Heart left ventricle (tissue), 16 donors: ENCODE measurements at regions of chr11 and their contacts with region 1.

Region 1: GRCh38 chr11:83071567-83072349 is at the start of gene RAB30:
- DNase-seq: peak; percentile 93 to 99 (median 98)
- ATAC-seq: peak; percentile 98 to 99 (median 99)
- H3K4me3 ChIP-seq: peak within 1 kb of the TSS; percentile 56 to 95 (median 84)
- H3K27ac ChIP-seq: peak within 1 kb of the TSS; percentile 63 to 95 (median 93)
- H3K4me1 ChIP-seq: peaks cover 12 to 64% (median 39%) of the 10 kb centered on the region in 12 donors
- H3K27me3 ChIP-seq: no peaks in the 10 kb centered on the region
- CTCF ChIP-seq: no peak
- POLR2A ChIP-seq: peak; percentile 51 to 88
- total RNA-seq, gene RAB30: 13.8 to 28.4 (median 23.4) TPM

Region 2: GRCh38 chr11:82906244-82906654 is 165.5 kb before region 1 on chr11:
- intact Hi-C with region 1: loop called in 5 of 10 experiments (anchors 5 kb)
- DNase-seq: no peak
- ATAC-seq: no peak
- H3K4me3 ChIP-seq: no peak overlapping the region
- H3K27ac ChIP-seq: peak overlapping the region in 1 of 12 donors; percentile 6
- H3K4me1 ChIP-seq: peaks cover 0 to 21% (median 3%) of the 10 kb centered on the region in 12 donors
- H3K27me3 ChIP-seq: no peaks in the 10 kb centered on the region
- CTCF ChIP-seq: peak; percentile 53 to 77 (median 72)
- POLR2A ChIP-seq: no peak

Region 3: GRCh38 chr11:82969811-82970210 is 101.9 kb before region 1 on chr11:
- intact Hi-C with region 1: loop called in 1 of 10 experiments (anchors 5 kb)
- DNase-seq: no peak
- ATAC-seq: no peak
- H3K4me3 ChIP-seq: no peak overlapping the region
- H3K27ac ChIP-seq: no peak overlapping the region
- H3K4me1 ChIP-seq: no peaks in the 10 kb centered on the region
- H3K27me3 ChIP-seq: no peaks in the 10 kb centered on the region
- CTCF ChIP-seq: no peak
- POLR2A ChIP-seq: no peak

Region 4: DNA sequence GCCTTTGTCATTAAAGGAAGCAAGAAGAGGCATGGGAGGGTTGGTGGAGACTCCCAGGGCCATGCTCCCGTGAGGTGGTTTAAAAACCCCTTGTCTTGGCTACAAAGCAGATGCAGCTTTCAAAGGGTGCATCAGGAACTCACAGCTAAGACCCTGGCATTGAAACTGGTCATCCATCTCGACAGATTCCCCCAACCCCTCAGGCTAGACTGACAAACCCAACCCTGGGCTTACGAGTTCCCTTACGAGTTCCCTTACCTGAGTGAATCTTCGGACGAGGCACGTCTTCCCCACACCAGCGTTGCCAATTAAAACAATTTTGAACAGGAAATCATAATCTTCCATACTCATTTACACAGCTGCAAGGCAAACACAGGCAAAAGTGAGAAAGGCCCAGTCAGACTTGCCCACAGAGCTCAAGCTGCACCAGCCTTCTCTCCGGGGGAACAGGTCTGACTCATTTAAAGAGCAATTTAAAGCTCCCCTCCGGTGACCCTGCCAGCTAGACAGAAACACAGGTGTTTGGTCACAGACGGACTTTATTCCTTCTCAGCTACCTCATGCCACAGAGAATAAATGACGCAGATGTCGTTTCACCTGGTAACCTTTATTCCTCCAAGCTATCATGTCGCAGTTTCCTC is 74.7 kb before region 1 on chr11:
- intact Hi-C with region 1: loop called in 4 of 10 experiments (anchors 5 kb)
- DNase-seq: no peak
- ATAC-seq: no peak
- H3K4me3 ChIP-seq: no peak overlapping the region
- H3K27ac ChIP-seq: peak overlapping the region in 5 of 12 donors; percentile 8 to 65 (median 40)
- H3K4me1 ChIP-seq: peaks cover 0 to 84% (median 42%) of the 10 kb centered on the region in 12 donors
- H3K27me3 ChIP-seq: no peaks in the 10 kb centered on the region
- CTCF ChIP-seq: no peak
- POLR2A ChIP-seq: no peak

Region 5: DNA sequence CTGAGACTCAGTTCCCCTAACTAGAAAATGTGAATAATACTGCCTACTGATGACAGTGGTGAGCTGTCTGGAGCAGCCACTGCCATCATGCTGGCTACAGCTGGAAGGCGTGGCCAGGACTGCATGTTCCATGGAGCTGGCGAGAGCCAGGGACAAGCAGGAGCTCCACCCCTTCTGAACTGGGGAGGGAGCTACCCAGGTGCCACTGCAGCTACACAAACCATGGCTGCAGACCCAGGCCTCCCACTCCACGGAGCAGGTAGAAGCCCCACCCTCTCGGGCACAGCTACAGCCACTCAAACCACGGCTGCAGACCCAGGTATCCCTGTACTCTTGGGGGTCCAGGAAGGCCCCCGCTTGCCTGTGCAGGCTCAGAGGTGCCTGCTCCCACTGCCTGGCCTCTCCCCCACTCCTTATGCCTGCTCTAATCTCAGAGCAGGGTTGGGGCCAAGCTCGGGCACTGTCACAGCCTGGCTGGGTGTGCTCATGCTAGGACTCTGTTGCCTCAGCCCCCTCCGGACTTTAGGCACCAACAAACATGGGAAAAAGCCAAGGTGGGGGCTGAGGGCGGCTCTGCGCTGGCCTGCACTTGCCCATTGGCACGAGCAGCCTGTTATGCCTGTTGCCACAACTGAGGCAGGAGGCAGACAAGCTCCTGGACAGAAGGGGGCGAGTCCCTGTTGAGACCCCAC is 51.7 kb before region 1 on chr11:
- intact Hi-C with region 1: no loop called
- DNase-seq: peak in 4 of 5 donors; percentile 43 to 84 (median 74)
- ATAC-seq: peak; percentile 96 to 97 (median 96)
- H3K4me3 ChIP-seq: peak overlapping the region in 2 of 12 donors; percentile 8 to 12
- H3K27ac ChIP-seq: peak overlapping the region in 5 of 12 donors; percentile 6 to 69 (median 50)
- H3K4me1 ChIP-seq: peaks cover 0 to 60% (median 26%) of the 10 kb centered on the region in 12 donors
- H3K27me3 ChIP-seq: no peaks in the 10 kb centered on the region
- CTCF ChIP-seq: no peak
- POLR2A ChIP-seq: no peak

Region 6: DNA sequence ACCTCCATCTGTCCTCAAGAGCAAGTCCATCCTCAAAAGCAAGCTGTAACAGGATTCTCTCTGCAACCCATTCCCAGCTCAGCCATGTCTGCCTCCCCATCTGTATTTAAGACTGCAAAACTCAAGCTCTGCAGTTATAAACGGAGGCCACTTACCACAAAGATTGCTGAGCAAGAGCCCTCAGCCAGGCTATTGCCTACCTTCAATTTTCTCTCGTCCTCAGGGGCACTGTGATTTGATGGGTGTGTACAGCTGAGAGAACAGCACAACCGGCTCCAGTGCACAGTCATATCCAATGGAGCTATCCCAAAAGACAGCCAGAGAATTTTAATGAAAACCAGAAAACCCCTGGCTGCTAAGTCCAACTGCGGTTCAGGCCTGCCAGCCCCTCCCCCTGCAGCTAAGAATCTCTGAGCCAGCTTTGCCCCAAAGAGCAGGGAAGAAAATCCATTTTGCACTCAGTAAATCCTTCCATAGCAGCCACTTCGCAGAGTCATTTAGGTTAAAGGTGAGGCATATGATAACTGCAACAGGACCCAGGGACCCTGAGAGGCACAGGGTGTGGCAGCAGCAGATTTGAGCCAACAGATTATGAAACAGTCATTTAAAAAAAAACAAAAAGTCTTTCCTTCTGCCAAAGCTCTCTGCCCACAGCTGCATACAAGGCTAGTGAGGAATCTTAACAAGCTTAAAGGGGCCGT is 37.6 kb before region 1 on chr11:
- intact Hi-C with region 1: loop called in 2 of 10 experiments (anchors 1 kb)
- DNase-seq: peak in 3 of 5 donors; percentile 26 to 66 (median 32)
- ATAC-seq: peak; percentile 82 to 89 (median 86)
- H3K4me3 ChIP-seq: peak overlapping the region in 11 of 12 donors; percentile 3 to 52 (median 43)
- H3K27ac ChIP-seq: peak overlapping the region; percentile 51 to 87 (median 78)
- H3K4me1 ChIP-seq: peaks cover 3 to 67% (median 51%) of the 10 kb centered on the region in 12 donors
- H3K27me3 ChIP-seq: no peaks in the 10 kb centered on the region
- CTCF ChIP-seq: no peak
- POLR2A ChIP-seq: no peak

Region 7: GRCh38 chr11:83156150-83156995 is 84.6 kb after region 1 on chr11:
- intact Hi-C with region 1: loop called (anchors 1 to 10 kb)
- DNase-seq: peak; percentile 98 to 100 (median 99)
- ATAC-seq: peak; percentile 95 to 98 (median 96)
- H3K4me3 ChIP-seq: peak overlapping the region; percentile 43 to 92 (median 70)
- H3K27ac ChIP-seq: peak overlapping the region; percentile 71 to 99 (median 91)
- H3K4me1 ChIP-seq: peaks cover 2 to 31% (median 19%) of the 10 kb centered on the region in 12 donors
- H3K27me3 ChIP-seq: no peaks in the 10 kb centered on the region
- CTCF ChIP-seq: no peak
- POLR2A ChIP-seq: peak; percentile 17 to 52

Region 8: GRCh38 chr11:83285771-83286528 is 214.2 kb after region 1 on chr11 and contains the start of gene CCDC90B:
- intact Hi-C with region 1: loop called in 1 of 10 experiments (anchors 5 kb)
- DNase-seq: peak; percentile 95 to 98 (median 96)
- ATAC-seq: peak; percentile 98 to 99 (median 98)
- H3K4me3 ChIP-seq: peak within 1 kb of the TSS; percentile 29 to 99 (median 83)
- H3K27ac ChIP-seq: peak within 1 kb of the TSS; percentile 90 to 99 (median 98)
- H3K4me1 ChIP-seq: peaks cover 0 to 45% (median 26%) of the 10 kb centered on the region in 12 donors
- H3K27me3 ChIP-seq: no peaks in the 10 kb centered on the region
- CTCF ChIP-seq: peak in 3 of 12 donors; percentile 14 to 46 (median 29)
- POLR2A ChIP-seq: peak in 1 of 2 donors; percentile 84
- total RNA-seq, gene CCDC90B: 18.0 to 31.7 (median 26.7) TPM